ENCODE measurements at regions of chr1 and their contacts with region 1.

Region 1: GRCh38 chr1:3618881-3619671 is 5.7 kb upstream of the TPRG1L start:
- DNase-seq: peak; percentile 74 to 90 (median 80)
- H3K4me3 ChIP-seq: no peak overlapping the region
- H3K27ac ChIP-seq: no peak overlapping the region
- H3K4me1 ChIP-seq: peaks cover 0 to 23% (median 10%) of the 10 kb centered on the region in 3 donors
- H3K27me3 ChIP-seq: no peaks in the 10 kb centered on the region
- CTCF ChIP-seq: peak; percentile 90

Region 2: GRCh38 chr1:3270403-3271245 is 348.5 kb before region 1 on chr1:
- intact Hi-C with region 1: no loop called
- DNase-seq: no peak
- H3K4me3 ChIP-seq: no peak overlapping the region
- H3K27ac ChIP-seq: peak overlapping the region in 1 of 2 donors; percentile 24
- H3K4me1 ChIP-seq: peaks cover 0 to 5% (median 0%) of the 10 kb centered on the region in 3 donors
- H3K27me3 ChIP-seq: peaks cover 5% of the 10 kb centered on the region
- CTCF ChIP-seq: no peak

Region 3: DNA sequence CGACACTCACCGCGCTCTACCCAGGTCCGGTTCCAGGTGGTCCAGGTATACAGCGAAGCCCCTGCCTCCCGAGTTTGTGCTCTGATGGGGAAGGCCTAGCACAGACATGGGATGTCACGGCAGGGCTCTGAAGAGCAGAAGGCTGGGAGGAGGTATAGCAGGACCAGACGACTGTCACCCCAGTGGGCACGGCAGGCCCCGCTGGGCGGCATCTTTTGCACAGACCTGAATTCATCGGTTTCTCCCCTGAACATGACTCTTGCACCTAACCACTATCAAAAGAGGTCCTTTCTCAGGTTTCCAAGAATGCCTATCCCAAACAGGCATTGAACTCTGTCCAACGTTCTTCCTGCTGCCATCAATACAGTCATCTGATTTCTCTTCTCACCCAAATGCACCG is 134.1 kb before region 1 on chr1:
- intact Hi-C with region 1: loop called (anchors 5 kb)
- DNase-seq: no peak
- H3K4me3 ChIP-seq: no peak overlapping the region
- H3K27ac ChIP-seq: no peak overlapping the region
- H3K4me1 ChIP-seq: peaks cover 0 to 2% (median 0%) of the 10 kb centered on the region in 3 donors
- H3K27me3 ChIP-seq: no peaks in the 10 kb centered on the region
- CTCF ChIP-seq: no peak

Region 4: DNA sequence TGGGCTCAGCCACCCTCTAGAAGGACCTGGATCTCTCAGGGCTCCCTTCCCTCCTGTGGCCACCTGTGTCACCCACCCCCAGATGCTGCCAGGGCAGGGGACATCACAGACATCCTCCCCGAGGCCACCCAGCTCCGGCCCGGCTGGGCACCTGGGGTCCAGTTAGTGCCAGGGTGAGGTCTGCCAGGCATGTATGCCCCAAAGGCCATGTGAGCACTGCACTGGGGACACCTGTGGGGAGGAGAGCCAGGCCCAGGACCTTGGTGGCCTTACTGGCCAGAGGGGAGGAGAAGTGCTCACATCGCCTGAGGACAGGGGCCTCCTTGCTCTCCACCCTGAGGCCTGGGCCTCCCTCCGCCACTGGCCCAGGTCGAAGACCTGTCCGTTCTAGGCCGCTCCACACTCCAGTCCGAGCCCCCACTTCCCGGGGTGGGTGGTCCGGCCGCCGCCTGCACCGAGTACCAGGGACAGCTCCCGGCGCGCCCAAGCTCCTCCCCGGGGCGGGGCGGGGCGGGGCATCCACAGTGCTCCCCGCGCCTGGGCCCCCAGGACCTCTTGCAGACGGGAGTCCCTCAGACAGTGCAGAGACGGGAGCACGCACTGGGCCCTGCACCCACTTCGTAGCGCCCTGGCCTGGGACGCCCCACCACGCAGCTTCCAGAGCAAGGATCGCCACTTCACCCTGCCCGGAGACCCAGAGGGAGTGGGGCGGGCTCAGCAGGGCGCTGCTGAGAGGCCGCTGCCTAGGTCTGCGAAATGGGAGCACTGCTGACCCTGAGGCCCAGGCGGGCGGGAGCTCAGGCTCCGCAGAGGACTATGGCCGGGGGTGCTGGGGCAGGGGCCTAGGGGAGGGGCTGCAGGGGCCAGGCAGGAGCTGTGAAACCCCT is 98.9 kb after region 1 on chr1:
- intact Hi-C with region 1: no loop called
- DNase-seq: peak in 4 of 5 donors; percentile 55 to 75 (median 73)
- H3K4me3 ChIP-seq: no peak overlapping the region
- H3K27ac ChIP-seq: no peak overlapping the region
- H3K4me1 ChIP-seq: no peaks in the 10 kb centered on the region
- H3K27me3 ChIP-seq: no peaks in the 10 kb centered on the region
- CTCF ChIP-seq: no peak

Measured in kidney (tissue), 22 donors.